OCI-LY7 (cell line): ENCODE measurements at regions of chr10 and their contacts with region 1.

Region 1: DNA sequence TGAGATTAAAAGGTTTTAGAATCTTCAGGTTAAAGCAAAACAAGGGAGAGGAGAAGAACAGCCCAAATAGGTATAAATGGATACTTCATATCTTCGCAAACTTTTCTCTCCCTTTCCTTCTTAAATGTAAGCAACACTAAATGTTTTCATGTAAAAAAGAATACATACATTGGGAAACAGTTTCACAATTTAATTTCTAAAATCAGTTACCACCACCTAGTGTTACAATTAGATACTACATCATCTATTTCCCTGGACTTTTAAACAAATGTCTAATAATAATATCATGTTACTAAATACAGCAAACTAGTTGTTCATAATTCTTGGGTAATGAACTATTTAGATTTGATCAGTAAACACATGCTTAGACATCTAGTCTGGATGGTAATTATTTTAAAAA is 35.8 kb downstream of the MINDY3 start:
- DNase-seq: peak; percentile 13
- H3K4me3 ChIP-seq: no peak overlapping the region
- H3K27ac ChIP-seq: no peak overlapping the region
- H3K4me1 ChIP-seq: no peaks in the 10 kb centered on the region
- CTCF ChIP-seq: peak; percentile 78

Region 2: DNA sequence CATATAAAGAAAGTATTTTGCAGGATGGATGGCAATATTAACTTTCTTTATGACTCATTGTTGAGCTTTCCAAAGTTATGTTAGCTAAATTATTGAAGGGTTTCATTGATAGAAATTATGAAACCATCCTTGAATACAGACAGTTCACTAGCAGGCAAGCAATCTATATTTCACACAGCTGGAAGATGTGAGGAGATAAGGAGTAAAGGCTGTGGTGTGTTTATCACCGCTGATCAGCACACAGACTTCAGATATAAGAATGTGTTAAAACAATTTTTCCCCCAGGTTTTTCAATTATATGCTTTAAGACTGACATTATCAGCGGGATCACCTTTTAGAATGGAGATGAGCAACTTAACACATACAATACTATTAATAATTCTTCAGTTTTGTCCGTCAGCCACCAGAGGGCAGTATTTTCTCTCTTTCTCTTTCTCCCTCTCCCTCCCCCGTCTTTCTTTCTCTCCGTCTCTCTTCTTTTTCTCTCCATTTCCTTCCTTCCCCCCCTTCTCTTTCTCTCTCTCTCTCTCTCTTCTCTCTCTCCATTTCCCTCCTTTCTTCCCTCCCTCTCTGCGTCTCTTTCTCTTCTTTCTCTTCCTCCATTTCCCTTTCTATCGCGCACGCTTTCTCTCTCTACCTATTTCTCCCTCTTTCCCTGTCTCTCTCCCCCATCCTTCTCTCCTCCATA is 390.5 kb before region 1 on chr10:
- CTCF ChIA-PET with region 1: no interaction called
- POLR2A ChIA-PET with region 1: no interaction called
- intact Hi-C with region 1: loop called (anchors 5 kb)
- DNase-seq: peak; percentile 54
- H3K4me3 ChIP-seq: no peak overlapping the region
- H3K27ac ChIP-seq: no peak overlapping the region
- H3K4me1 ChIP-seq: no peaks in the 10 kb centered on the region
- CTCF ChIP-seq: peak; percentile 80

Region 3: GRCh38 chr10:15585303-15585715 is 239.2 kb before region 1 on chr10:
- CTCF ChIA-PET with region 1: no interaction called
- POLR2A ChIA-PET with region 1: no interaction called
- intact Hi-C with region 1: loop called (anchors 2 kb)
- DNase-seq: peak; percentile 57
- H3K4me3 ChIP-seq: no peak overlapping the region
- H3K27ac ChIP-seq: no peak overlapping the region
- H3K4me1 ChIP-seq: no peaks in the 10 kb centered on the region
- CTCF ChIP-seq: peak; percentile 94

Region 4: GRCh38 chr10:15652117-15652516 is 172.4 kb before region 1 on chr10:
- CTCF ChIA-PET with region 1: interaction called, 3 read pairs
- POLR2A ChIA-PET with region 1: no interaction called
- intact Hi-C with region 1: loop called (anchors 2 kb)
- DNase-seq: no peak
- H3K4me3 ChIP-seq: no peak overlapping the region
- H3K27ac ChIP-seq: no peak overlapping the region
- H3K4me1 ChIP-seq: no peaks in the 10 kb centered on the region
- CTCF ChIP-seq: no peak

Region 5: DNA sequence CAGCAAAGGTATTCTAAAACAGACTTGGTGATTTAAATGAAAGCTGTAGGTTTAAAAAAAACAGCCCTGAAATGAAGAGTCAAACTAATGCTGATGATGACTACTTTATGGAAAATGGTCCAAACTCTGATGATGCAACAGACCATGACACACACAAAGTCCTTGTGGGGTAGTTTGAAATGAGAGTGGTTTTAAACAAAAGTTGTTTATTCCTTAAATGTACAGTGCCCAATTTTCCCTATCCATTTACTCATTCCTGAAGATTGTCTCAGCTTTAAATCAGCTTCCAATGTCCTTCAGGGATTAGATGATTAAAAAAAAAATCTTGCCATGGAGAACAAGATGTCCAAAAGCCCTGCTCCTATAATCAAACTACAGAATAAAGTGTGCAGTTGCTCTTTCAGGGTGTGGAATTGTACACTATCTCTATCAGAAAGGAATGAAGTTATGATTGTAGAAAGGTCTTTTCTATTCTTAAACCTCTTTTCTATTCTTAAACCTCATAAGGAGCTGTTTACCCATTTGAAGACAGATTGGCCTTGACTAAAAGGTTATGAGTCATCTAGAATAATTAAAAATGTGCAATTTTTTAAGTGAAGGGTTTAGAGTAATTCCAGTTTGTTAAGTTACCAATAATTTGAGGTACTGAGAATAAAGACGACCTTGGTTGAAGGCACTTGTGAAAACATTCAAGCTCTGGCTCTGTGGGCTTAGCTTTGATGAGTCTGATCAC is 34.5 kb before region 1 on chr10:
- CTCF ChIA-PET with region 1: no interaction called
- POLR2A ChIA-PET with region 1: no interaction called
- intact Hi-C with region 1: loop called (anchors 5 kb)
- DNase-seq: no peak
- H3K4me3 ChIP-seq: no peak overlapping the region
- H3K27ac ChIP-seq: no peak overlapping the region
- H3K4me1 ChIP-seq: peaks cover 31% of the 10 kb centered on the region
- CTCF ChIP-seq: no peak